H1 (cell line): ENCODE measurements at regions of chr10 and their contacts with region 1.

Region 1: GRCh38 chr10:99374526-99374925 is 45.4 kb downstream of the CNNM1 start:
- DNase-seq: no peak
- H3K4me3 ChIP-seq: no peak overlapping the region
- H3K27ac ChIP-seq: no peak overlapping the region
- H3K4me1 ChIP-seq: no peaks in the 10 kb centered on the region
- H3K27me3 ChIP-seq: no peaks in the 10 kb centered on the region
- CTCF ChIP-seq: no peak
- EP300 ChIP-seq: no peak
- POLR2A ChIP-seq: no peak
- RAD21 ChIP-seq: no peak

Region 2: GRCh38 chr10:99394256-99394655 is 19.7 kb after region 1 on chr10:
- CTCF ChIA-PET with region 1: interaction called, 10 read pairs
- POLR2A ChIA-PET with region 1: no interaction called
- DNase-seq: no peak
- H3K4me3 ChIP-seq: no peak overlapping the region
- H3K27ac ChIP-seq: no peak overlapping the region
- H3K4me1 ChIP-seq: peaks cover 3 to 18% (median 11%) of the 10 kb centered on the region in 4 experiments; a peak in 6 of 7 replicates
- H3K27me3 ChIP-seq: no peaks in the 10 kb centered on the region
- CTCF ChIP-seq: no peak
- EP300 ChIP-seq: no peak
- POLR2A ChIP-seq: no peak
- RAD21 ChIP-seq: no peak